A549 (cell line): ENCODE measurements at regions of chr4 and their contacts with region 1.

Region 1: DNA sequence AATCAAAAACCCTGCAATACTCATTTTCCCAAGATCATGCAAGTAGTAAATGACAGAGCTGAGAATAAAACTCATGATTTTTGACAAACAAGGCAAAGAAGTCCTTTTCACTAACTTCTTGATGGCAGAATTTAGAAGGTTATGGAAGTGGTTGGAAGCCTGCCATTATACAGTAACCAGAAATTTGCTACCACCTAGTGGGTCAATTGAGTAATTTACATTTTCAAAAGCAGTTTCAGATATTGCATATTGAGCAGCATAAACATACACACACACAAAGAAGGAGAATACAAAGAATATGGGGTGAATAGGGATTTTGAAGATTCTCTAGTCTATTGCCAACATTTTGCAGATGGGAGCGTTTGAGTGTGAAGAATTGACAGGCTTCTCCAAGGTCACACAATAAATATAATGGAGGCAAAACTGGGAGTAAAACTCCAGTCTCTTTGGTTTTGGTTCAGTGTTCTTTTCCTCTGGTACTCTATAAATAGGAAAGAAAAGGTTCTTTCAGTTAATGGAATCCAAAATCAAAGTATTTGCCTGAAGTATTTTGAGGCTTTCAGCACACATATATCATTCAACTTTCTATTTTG is 70.2 kb downstream of the GC start:
- DNase-seq: peak in 1 of 2 experiments; percentile 48
- ATAC-seq: peak in 1 of 2 experiments; percentile 56; a peak in 2 of 6 replicates
- H3K4me3 ChIP-seq: no peak overlapping the region
- H3K27ac ChIP-seq: no peak overlapping the region
- H3K4me1 ChIP-seq: 0 out of 3 replicates have a peak, but pooled peaks cover 6% of the 10 kb centered on the region
- CTCF ChIP-seq: peak; percentile 67
- EP300 ChIP-seq: no peak
- POLR2A ChIP-seq: no peak
- RAD21 ChIP-seq: peak; percentile 83 to 84

Region 2: GRCh38 chr4:71270901-71271300 is 442.8 kb before region 1 on chr4:
- CTCF ChIA-PET with region 1: interaction called, 15 read pairs
- POLR2A ChIA-PET with region 1: no interaction called
- DNase-seq: peak; percentile 3 to 46
- ATAC-seq: peak; percentile 78 to 84; a peak in 5 of 6 replicates
- H3K4me3 ChIP-seq: no peak overlapping the region
- H3K27ac ChIP-seq: no peak overlapping the region
- H3K4me1 ChIP-seq: 0 out of 3 replicates have a peak, but pooled peaks cover 2% of the 10 kb centered on the region
- CTCF ChIP-seq: peak; percentile 40
- EP300 ChIP-seq: no peak
- POLR2A ChIP-seq: no peak
- RAD21 ChIP-seq: peak; percentile 62 to 67